Activated CD4-positive, alpha-beta T cell treated with anti-CD3 and anti-CD28 coated beads, Interleukin-2, amount 10 ng/mL, durations not matched to agents 7 days and 5 days (primary cell): ENCODE measurements at regions of chr12 and their contacts with region 1.

Region 1: GRCh38 chr12:6563448-6564050 is 4.5 kb downstream of the NOP2 start:
- DNase-seq: peak; percentile 73
- H3K4me3 Mint-ChIP-seq: no peak overlapping the region
- H3K27ac Mint-ChIP-seq: no peak overlapping the region
- H3K4me1 Mint-ChIP-seq: peaks cover 43% of the 10 kb centered on the region
- H3K27me3 Mint-ChIP-seq: no peaks in the 10 kb centered on the region

Region 2: GRCh38 chr12:6592087-6592486 is 28.5 kb after region 1 on chr12:
- CTCF ChIA-PET with region 1: interaction called, 3 read pairs
- POLR2A ChIA-PET with region 1: interaction called, 10 read pairs
- DNase-seq: no peak
- H3K4me3 Mint-ChIP-seq: no peak overlapping the region
- H3K27ac Mint-ChIP-seq: no peak overlapping the region
- H3K4me1 Mint-ChIP-seq: peaks cover 7% of the 10 kb centered on the region
- H3K27me3 Mint-ChIP-seq: no peaks in the 10 kb centered on the region

Region 3: DNA sequence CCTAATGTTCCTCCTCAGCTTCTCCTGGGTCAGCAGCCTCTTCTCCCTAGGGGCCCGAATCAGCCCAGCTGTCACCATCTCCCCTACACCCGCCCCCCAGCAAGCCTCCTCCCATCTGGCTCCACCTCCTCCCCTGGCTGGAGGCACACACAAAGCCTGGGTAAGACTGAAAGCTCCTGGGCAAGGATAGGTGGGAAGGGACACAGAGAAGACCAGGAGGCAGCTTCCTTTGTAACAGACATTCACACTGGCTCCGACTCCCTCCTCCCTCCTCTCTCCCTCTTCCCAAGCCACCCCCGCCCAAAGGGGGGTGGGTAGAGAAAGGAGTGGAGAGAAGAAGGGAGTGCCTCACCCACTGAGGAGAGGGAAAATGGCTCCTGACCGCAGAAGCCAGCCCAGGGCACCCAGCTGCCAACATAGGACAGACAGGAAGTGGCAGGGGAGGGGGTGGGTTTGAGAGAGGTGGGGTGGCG is 39.6 kb after region 1 on chr12:
- CTCF ChIA-PET with region 1: interaction called, 12 read pairs
- POLR2A ChIA-PET with region 1: no interaction called
- DNase-seq: peak; percentile 52
- H3K4me3 Mint-ChIP-seq: no peak overlapping the region
- H3K27ac Mint-ChIP-seq: peak overlapping the region; percentile 88
- H3K4me1 Mint-ChIP-seq: peaks cover 46% of the 10 kb centered on the region
- H3K27me3 Mint-ChIP-seq: no peaks in the 10 kb centered on the region

Region 4: DNA sequence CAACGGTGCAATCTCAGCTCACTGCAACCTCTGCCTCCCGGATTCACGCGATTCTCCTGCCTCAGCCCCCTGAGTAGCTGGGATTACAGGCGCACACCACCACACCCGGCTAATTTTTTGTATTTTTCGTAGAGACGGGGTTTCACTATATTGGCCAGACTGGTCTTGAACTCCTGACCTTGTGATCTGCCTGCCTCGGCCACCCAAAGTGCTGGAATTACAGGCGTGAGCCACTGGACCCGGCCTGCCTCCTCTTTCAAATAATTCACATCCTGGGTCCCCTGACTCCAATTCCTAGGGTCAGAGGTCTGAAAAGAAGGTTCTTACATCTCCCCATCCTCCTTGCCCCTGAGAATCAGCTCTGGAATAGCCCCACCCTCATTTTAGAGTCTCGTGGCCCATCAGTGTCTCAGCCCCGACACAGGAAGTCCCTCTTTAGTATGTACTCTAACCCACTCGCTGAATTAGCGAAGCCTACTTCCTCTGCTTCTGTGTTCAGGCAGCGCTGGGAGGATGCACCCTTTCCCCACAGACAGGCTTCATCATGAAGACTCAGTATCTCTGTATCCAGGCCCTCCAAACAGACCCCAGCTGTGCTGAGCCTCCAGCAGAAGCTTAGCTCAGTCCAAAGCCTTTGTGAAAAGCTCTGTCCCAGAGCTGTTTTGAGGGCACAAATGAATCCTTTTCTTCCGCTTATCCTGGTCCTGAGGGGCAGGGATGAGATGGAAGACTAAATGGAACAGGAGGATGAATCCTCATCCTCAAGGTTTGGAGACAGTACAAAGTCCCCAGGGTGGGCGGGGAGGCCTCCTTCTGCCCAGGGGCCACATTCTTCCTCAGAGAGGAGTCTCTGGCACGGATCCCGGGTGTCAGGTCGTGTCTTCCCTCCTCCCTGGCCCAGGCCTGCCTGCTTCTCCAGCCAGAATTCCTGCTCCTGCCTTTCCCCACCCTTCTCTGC is 68.8 kb after region 1 on chr12:
- CTCF ChIA-PET with region 1: no interaction called
- POLR2A ChIA-PET with region 1: no interaction called
- DNase-seq: peak; percentile 75
- H3K4me3 Mint-ChIP-seq: peak overlapping the region; percentile 70
- H3K27ac Mint-ChIP-seq: peak overlapping the region; percentile 95
- H3K4me1 Mint-ChIP-seq: peaks cover 66% of the 10 kb centered on the region
- H3K27me3 Mint-ChIP-seq: no peaks in the 10 kb centered on the region